MCF 10A (cell line): ENCODE measurements at regions of chr16 and their contacts with region 1.

Region 1: DNA sequence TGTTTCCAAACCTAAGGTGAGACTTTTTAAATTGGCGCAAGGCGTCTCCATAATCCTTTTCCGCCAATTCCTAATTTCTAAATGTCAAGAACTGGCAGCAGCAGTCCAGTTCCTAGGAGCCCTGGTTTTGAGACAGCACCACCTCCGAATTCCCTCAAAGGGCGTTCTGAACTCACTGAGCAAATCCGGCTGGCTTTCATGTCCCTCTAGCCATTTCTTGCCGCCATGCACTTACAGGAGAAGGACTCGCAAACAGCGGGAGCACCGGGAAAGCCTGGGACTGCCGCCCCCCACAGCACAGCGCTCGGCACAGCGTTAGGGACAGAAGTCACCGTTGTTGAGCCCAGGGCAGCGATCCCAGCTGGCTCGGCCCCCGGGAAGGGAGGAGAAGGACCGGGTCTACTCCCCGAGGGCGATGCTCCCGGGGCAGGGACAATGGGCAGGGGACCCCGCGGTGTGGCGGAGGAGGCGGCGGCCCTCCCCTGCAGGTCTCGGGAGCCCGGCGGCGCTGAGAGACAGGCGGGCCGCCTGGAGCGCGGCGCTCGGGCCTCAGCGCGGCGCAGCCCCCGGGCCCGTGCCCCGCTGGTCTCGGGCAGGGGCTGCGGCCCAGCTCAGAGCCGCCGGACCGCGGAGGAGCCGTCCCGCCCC is 545 bp downstream of the ARHGAP17 start:
- DNase-seq: peak; percentile 49
- H3K4me3 Mint-ChIP-seq: peak overlapping the region; percentile 95
- H3K27ac Mint-ChIP-seq: peak overlapping the region; percentile 97
- H3K4me1 Mint-ChIP-seq: peaks cover 22% of the 10 kb centered on the region
- H3K27me3 Mint-ChIP-seq: no peaks in the 10 kb centered on the region
- CTCF ChIP-seq: no peak

Region 2: GRCh38 chr16:24921229-24921628 is 93.4 kb before region 1 on chr16:
- CTCF ChIA-PET with region 1: no interaction called
- POLR2A ChIA-PET with region 1: no interaction called
- intact Hi-C with region 1: no loop called
- DNase-seq: no peak
- H3K4me3 Mint-ChIP-seq: no peak overlapping the region
- H3K27ac Mint-ChIP-seq: no peak overlapping the region
- H3K4me1 Mint-ChIP-seq: no peaks in the 10 kb centered on the region
- H3K27me3 Mint-ChIP-seq: no peaks in the 10 kb centered on the region
- CTCF ChIP-seq: no peak

Region 3: GRCh38 chr16:25031441-25032307 is 17.1 kb after region 1 on chr16:
- CTCF ChIA-PET with region 1: interaction called, 4 read pairs
- POLR2A ChIA-PET with region 1: interaction called, 15 read pairs
- intact Hi-C with region 1: no loop called
- DNase-seq: peak; percentile 97
- H3K4me3 Mint-ChIP-seq: peak overlapping the region; percentile 94
- H3K27ac Mint-ChIP-seq: peak overlapping the region; percentile 88
- H3K4me1 Mint-ChIP-seq: peaks cover 5% of the 10 kb centered on the region
- H3K27me3 Mint-ChIP-seq: no peaks in the 10 kb centered on the region
- CTCF ChIP-seq: no peak